AG04449 (cell line): ENCODE measurements at regions of chr12 and their contacts with region 1.

Region 1: DNA sequence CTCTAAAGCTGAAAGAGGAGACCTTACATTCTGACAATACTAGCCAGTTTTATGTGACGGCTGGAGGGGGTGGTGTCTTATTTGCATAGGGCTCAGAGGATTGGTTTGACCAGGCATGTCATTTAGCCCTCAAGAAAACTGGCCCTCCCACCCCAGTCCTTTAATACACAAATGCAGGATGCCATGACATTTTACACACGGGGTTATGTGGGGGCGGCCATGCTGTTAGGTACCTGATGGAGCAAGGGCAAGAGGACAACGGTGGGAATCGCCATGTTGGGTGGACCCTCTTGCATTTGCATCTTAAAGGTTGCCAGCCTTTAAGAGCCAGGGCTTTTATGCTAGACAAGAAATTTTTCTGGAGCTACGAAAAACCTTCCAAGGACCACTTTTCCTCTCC is 23.3 kb downstream of the MDM2 start:
- DNase-seq: no peak
- H3K4me3 ChIP-seq: no peak overlapping the region
- CTCF ChIP-seq: no peak

Region 2: DNA sequence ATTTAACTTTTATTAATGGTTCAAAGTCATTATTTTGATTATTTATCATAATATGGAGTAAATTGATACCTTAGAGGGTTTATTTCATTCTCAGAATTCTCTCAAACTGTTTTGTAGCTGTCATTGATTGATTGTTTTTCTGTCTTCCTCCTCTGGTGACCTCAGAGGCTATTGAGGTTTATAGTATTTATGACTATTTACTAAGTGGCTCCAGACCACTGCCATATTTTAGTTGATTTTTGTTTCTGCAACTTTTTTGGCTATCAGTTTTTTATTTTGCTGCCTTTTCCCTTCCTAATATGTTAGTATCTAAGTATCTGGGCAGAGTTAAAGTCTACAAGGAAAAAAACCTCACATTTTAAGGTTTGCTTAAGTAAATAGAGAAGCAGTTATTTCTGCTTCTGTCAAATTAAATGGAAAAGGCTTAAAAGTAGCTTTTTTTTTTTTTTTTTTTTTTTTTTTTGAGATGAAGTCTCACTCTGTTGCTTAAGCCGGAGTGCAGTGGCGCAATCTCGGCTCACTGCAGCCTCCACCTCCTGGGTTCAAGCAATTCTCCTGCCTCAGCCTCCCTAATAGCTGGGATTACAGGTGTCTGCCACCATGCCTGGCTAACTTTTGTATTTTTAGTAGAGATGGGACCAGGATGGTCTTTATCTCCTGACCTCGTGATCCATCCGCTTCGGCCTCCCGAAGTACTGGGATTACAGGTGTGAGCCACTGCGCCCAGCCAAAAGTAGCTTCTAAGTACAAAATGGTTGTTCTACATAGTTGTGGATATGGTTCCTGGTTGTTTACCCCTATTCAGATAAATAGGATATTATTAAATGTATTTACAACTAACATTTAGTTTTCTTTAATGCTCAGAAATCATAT is 15.1 kb before region 1 on chr12:
- CTCF ChIA-PET with region 1: interaction called, 38 read pairs
- POLR2A ChIA-PET with region 1: interaction called, 4 read pairs
- DNase-seq: no peak
- H3K4me3 ChIP-seq: no peak overlapping the region
- CTCF ChIP-seq: no peak

Region 3: GRCh38 chr12:68844788-68845695 is 13.8 kb after region 1 on chr12:
- CTCF ChIA-PET with region 1: interaction called, 54 read pairs
- POLR2A ChIA-PET with region 1: no interaction called
- DNase-seq: no peak
- H3K4me3 ChIP-seq: no peak overlapping the region
- CTCF ChIP-seq: no peak